H1 (cell line): ENCODE measurements at regions of chr19 and their contacts with region 1.

Region 1: DNA sequence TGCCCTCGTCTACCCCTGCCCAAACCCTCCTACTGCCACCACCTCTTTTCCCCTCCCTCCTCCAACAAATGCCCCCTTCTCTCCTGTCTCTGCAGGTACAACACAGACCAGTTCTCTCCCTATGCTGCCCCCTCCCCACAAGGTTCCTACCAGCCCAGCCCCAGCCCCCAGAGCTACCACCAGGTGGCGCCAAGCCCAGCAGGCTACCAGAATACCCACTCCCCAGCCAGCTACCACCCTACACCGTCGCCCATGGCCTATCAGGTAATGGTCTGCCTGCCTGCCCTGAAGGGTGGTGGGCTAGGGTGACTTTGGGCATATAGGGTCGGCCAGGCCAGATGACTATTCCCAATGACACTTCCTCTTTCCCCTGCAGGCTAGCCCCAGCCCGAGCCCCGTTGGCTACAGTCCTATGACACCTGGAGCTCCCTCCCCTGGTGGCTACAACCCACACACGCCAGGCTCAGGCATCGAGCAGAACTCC is 6.5 kb upstream of the TIMM50 start:
- DNase-seq: peak in 1 of 2 experiments; percentile 96
- H3K4me3 ChIP-seq: no peak overlapping the region
- H3K27ac ChIP-seq: no peak overlapping the region
- H3K4me1 ChIP-seq: no peaks in the 10 kb centered on the region; a peak in 1 of 7 replicates
- H3K27me3 ChIP-seq: no peaks in the 10 kb centered on the region
- CTCF ChIP-seq: peak; percentile 89 to 96 (median 92)
- EP300 ChIP-seq: no peak
- POLR2A ChIP-seq: no peak
- RAD21 ChIP-seq: peak; percentile 61 to 72

Region 2: DNA sequence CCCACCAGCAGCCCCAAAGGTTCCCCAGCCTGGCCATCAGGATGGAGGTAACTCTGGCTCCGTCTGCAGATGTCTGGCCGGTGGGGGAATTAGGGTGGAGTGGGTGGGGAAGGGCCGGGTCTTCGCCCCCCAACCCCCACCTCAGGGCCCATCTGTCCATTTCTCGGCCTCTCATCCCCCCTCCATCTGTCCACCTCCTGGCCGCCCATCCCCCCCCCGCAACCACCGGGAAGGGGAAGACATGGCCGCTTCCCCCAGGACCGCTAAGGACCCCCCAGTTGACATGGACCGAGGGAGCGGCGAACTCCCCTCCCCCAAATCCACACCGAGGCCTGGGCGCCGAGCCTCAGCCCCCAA is 154.3 kb before region 1 on chr19:
- CTCF ChIA-PET with region 1: no interaction called
- POLR2A ChIA-PET with region 1: no interaction called
- DNase-seq: no peak
- H3K4me3 ChIP-seq: peak overlapping the region; percentile 63 to 88 (median 69)
- H3K27ac ChIP-seq: no peak overlapping the region
- H3K4me1 ChIP-seq: peaks cover 2 to 8% (median 3%) of the 10 kb centered on the region in 4 experiments; a peak in 5 of 7 replicates
- H3K27me3 ChIP-seq: peaks cover 0 to 14% (median 12%) of the 10 kb centered on the region in 4 experiments; a peak in 4 of 7 replicates
- CTCF ChIP-seq: no peak
- EP300 ChIP-seq: no peak
- POLR2A ChIP-seq: no peak
- RAD21 ChIP-seq: no peak

Region 3: DNA sequence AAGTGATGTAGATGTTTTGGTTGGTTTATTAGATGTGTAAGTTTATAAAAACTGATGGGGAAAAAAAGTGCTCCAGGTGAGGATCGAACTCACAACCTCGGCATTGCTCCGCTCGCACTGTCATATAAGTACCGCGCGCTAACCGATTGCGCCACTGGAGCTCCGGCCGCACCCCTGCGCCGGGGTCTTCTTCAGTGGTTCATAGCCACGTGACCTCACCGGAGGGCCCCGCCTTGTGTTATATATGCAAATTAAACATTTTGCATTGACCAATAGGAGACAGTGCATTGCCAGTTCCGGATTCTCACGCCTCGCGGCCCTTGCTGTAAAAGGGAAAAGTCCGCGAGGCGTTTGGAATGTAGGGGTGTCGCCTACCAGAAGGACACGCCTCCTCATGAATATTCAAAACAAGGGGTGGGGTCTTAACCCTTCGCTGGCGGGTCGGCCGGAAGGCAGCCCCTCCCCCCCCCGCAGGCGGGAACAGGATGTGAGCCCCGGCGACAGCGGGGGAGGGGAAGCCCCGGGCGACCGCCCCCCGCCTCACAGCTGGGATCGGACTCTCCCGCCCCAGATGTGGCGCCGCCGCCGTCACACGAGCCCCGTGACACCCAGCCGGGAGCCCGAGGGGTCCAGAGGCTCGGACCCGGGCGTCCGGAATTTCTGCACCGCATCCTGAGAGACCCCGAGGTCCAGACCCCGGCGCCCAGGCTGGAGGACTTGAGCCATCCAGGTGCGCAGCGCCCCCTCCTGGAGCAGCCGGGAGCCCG is 61.9 kb before region 1 on chr19 and contains the start of gene PLEKHG2:
- CTCF ChIA-PET with region 1: interaction called, 11 read pairs
- POLR2A ChIA-PET with region 1: interaction called, 1,154 read pairs
- DNase-seq: peak; percentile 99 to 100
- H3K4me3 ChIP-seq: peak within 1 kb of the TSS; percentile 66 to 97 (median 92)
- H3K27ac ChIP-seq: peak within 1 kb of the TSS; percentile 83
- H3K4me1 ChIP-seq: peaks cover 10 to 42% (median 21%) of the 10 kb centered on the region in 4 experiments; a peak in 6 of 7 replicates
- H3K27me3 ChIP-seq: no peaks in the 10 kb centered on the region
- CTCF ChIP-seq: peak; percentile 76 to 85 (median 81)
- EP300 ChIP-seq: no peak
- POLR2A ChIP-seq: peak; percentile 68 to 93
- RAD21 ChIP-seq: peak; percentile 35 to 52; a peak in 3 of 4 replicates
- total RNA-seq, gene PLEKHG2: 64.0 and 65.7 TPM in 2 replicates

Region 4: GRCh38 chr19:39435499-39436349 is 38.5 kb before region 1 on chr19 and contains the start of gene RPS16:
- CTCF ChIA-PET with region 1: interaction called, 6 read pairs
- POLR2A ChIA-PET with region 1: interaction called, 1,154 read pairs
- DNase-seq: peak; percentile 95 to 97
- H3K4me3 ChIP-seq: peak within 1 kb of the TSS; percentile 97 to 99 (median 98)
- H3K27ac ChIP-seq: peak within 1 kb of the TSS; percentile 91
- H3K4me1 ChIP-seq: peaks cover 0 to 10% (median 2%) of the 10 kb centered on the region in 4 experiments; a peak in 6 of 7 replicates
- H3K27me3 ChIP-seq: no peaks in the 10 kb centered on the region; a peak in 1 of 7 replicates
- CTCF ChIP-seq: no peak
- EP300 ChIP-seq: no peak
- POLR2A ChIP-seq: peak; percentile 98 to 100
- RAD21 ChIP-seq: no peak
- total RNA-seq, gene RPS16: 2,433 and 2,482 TPM in 2 replicates

Region 5: DNA sequence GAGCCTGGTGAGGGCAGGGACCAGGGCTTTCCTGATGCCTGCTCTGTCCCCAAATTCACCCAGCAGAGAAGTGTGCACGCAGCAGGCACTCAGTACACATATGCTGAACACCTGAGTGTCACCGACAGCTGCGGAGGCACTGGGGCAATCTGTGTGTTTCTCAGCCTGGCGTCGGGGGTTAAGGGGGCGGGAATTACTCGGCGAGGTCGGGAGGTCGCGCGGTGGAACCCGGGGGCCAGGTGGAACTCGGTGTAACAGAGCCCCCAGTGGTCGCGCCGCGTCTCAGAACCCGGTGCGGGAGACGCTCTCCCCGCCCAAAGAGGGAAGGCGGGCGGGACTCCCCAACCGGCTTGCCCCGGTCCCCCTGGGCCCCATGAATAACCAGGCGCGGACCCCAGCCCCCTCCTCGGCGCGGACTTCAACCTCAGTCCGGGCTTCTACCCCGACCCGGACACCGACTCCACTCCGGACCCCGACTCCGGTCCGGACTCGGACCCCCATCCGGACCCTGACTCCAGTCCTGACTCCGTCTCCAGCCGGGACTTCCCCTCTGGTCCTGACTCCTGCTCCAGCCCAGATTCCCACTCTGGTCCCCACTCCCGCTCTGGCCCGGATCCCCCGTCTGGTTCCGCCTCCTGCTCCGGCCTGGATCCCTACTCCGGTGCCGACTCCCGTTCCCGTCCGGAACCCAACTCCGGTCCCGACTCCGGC is 40.8 kb after region 1 on chr19 and contains the start of gene SELENOV:
- CTCF ChIA-PET with region 1: interaction called, 50 read pairs
- POLR2A ChIA-PET with region 1: interaction called, 4 read pairs
- DNase-seq: peak in 1 of 2 experiments; percentile 91
- H3K4me3 ChIP-seq: peak within 1 kb of the TSS; percentile 76 to 95 (median 90)
- H3K27ac ChIP-seq: peak within 1 kb of the TSS; percentile 61; the same call in 1 of the 2 replicates
- H3K4me1 ChIP-seq: peaks cover 0 to 10% (median 5%) of the 10 kb centered on the region in 4 experiments; a peak in 6 of 7 replicates
- H3K27me3 ChIP-seq: peaks cover 0 to 2% (median 0%) of the 10 kb centered on the region in 4 experiments; a peak in 3 of 7 replicates
- CTCF ChIP-seq: peak; percentile 24 to 41 (median 34)
- EP300 ChIP-seq: peak in 1 of 2 experiments; percentile 66; a peak in 1 of 3 replicates
- POLR2A ChIP-seq: peak in 1 of 2 experiments; percentile 60; a peak in 2 of 3 replicates
- RAD21 ChIP-seq: peak; percentile 26 to 43; a peak in 3 of 4 replicates
- total RNA-seq, gene SELENOV: 8.4 and 11.0 TPM in 2 replicates

Region 6: GRCh38 chr19:39532233-39533002 is 58.2 kb after region 1 on chr19 and contains the start of gene EID2B:
- CTCF ChIA-PET with region 1: interaction called, 78 read pairs
- POLR2A ChIA-PET with region 1: interaction called, 5 read pairs
- DNase-seq: peak; percentile 94 to 96
- H3K4me3 ChIP-seq: peak within 1 kb of the TSS; percentile 55 to 93 (median 78)
- H3K27ac ChIP-seq: no peak within 1 kb of the TSS
- H3K4me1 ChIP-seq: no peaks in the 10 kb centered on the region
- H3K27me3 ChIP-seq: peaks cover 0 to 3% (median 0%) of the 10 kb centered on the region in 4 experiments; a peak in 1 of 7 replicates
- CTCF ChIP-seq: peak; percentile 94 to 99 (median 99)
- EP300 ChIP-seq: no peak
- POLR2A ChIP-seq: peak in 1 of 2 experiments; percentile 51; a peak in 1 of 3 replicates
- RAD21 ChIP-seq: peak; percentile 97 to 99
- total RNA-seq, gene EID2B: 2.4 and 3.4 TPM in 2 replicates